Activated T-helper 2 cell treated with anti-CD3 and anti-CD28 coated beads, Interferon-gamma antibody, Interleukin-2, Interleukin-4, amounts not matched to agents 10 μg/mL and 5 μg/mL and 100 μg/mL, durations not matched to agents 14 hours and 24 hours and 36 hours (primary cell): ENCODE measurements at regions of chr14 and their contacts with region 1.

Region 1: GRCh38 chr14:61694830-61695694 is at the start of gene HIF1A:
- DNase-seq: peak; percentile 96
- H3K4me3 Mint-ChIP-seq: peak within 1 kb of the TSS; percentile 89
- H3K27ac Mint-ChIP-seq: peak within 1 kb of the TSS; percentile 95
- H3K4me1 Mint-ChIP-seq: peaks cover 50% of the 10 kb centered on the region
- H3K27me3 Mint-ChIP-seq: no peaks in the 10 kb centered on the region
- total RNA-seq, gene HIF1A: 131 and 138 TPM in 2 replicates

Region 2: DNA sequence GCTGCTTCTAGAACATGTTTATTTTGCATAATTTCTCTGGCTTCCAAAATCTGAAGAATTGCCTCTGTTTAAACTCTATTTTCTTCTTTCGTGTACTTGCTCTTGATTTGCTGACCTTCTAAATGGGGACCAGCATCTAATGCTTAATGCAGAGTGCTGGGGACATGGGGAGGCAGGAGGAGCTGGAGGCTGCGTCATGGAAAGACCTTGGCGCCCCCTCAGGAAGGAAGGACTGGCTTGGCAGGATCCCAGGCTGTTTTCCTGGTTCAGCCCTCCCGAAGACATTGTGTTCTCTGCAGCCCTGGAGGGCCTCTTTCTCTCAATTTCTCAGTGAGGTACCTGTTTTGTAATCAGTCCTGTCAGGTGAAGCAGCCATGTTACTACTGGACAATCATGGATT is 368.2 kb before region 1 on chr14:
- intact Hi-C with region 1: loop called (anchors 5 kb)
- DNase-seq: no peak
- H3K4me3 Mint-ChIP-seq: peak overlapping the region; percentile 76
- H3K27ac Mint-ChIP-seq: peak overlapping the region; percentile 86
- H3K4me1 Mint-ChIP-seq: peaks cover 61% of the 10 kb centered on the region
- H3K27me3 Mint-ChIP-seq: no peaks in the 10 kb centered on the region

Region 3: DNA sequence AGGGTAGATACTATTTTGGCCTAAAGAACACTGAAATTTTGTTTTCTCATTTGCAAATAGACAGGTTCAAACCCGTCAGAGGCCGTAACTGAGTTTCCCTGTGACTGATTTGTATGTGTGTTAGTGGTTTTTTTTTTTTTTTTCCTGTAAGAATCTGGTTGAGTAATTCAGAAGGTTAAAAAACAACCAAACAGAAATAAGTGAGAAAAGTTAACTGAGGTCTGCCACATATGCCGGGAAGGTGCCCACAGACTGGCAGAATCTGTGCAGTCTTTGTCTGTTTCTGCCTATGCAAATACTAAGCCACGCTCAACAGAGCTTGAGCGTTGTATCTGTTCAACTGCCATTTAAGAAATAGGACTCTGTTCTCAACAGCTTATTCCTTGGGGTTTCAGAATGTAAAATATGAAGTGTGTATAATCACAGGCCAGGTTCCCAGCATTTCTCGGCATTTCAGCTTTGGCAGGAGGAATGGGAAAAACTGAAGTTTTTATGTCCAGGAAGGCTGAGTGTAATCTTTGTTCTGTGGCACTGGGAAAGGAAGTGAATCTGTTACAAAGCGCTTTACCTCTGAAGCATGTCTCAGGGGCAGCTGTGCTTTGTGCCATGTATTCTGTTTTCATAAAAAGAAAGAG is 191.8 kb before region 1 on chr14:
- intact Hi-C with region 1: loop called (anchors 1 kb)
- DNase-seq: peak; percentile 24
- H3K4me3 Mint-ChIP-seq: peak overlapping the region; percentile 76
- H3K27ac Mint-ChIP-seq: peak overlapping the region; percentile 95
- H3K4me1 Mint-ChIP-seq: peaks cover 72% of the 10 kb centered on the region
- H3K27me3 Mint-ChIP-seq: no peaks in the 10 kb centered on the region

Region 4: DNA sequence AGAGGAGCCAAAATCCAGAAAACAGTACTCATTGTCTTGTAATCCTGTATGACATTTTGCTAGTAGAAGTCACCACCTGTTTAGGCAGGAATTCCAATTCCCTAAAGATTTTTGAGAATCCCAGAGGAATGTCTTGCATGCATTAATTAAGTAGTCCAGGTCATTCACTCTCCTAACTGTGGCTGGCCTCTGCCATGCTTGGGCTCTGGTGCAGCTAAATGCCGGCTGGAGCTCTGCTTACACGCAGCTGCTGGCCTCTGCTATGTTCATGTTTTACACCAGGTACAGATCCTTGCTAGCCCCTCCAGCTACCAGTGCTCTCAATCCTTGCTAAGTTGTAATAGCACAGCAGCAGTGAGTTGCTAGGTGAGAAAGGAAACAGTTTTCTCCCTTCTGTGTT is 16.1 kb before region 1 on chr14:
- intact Hi-C with region 1: no loop called
- DNase-seq: no peak
- H3K4me3 Mint-ChIP-seq: no peak overlapping the region
- H3K27ac Mint-ChIP-seq: no peak overlapping the region
- H3K4me1 Mint-ChIP-seq: peaks cover 11% of the 10 kb centered on the region
- H3K27me3 Mint-ChIP-seq: no peaks in the 10 kb centered on the region

Region 5: DNA sequence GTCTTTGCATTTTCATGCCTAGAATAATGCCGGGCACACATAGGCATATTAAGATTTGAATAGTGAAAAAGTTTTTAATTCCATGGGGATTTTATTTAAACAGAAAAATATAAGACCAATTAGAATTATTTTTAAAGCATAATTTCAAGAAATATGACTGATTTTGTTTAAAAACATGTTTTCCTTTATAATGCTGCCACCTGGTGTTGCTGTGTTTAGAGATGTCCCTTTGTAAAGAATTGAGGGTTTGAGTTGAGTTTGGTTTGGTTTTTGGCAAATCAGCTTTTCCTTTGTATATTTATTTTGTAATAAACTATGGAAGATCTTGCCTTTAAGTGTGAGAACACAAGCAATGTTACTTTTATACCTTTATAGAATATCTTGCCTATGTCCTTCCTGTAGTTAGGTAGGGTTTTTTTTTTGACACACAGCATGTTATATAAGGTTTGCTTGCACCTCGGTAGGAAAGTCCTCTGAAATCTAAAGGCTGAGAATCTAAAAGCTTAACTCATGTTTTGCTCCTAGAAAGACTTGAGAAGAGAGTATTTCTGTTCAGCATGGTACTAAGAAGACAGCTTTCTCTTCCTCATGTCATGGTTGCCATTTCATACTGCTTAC is 35.8 kb after region 1 on chr14:
- intact Hi-C with region 1: loop called (anchors 2 kb)
- DNase-seq: no peak
- H3K4me3 Mint-ChIP-seq: no peak overlapping the region
- H3K27ac Mint-ChIP-seq: peak overlapping the region; percentile 24
- H3K4me1 Mint-ChIP-seq: peaks cover 58% of the 10 kb centered on the region
- H3K27me3 Mint-ChIP-seq: no peaks in the 10 kb centered on the region